Dorsolateral prefrontal cortex (tissue), 120 donors: ENCODE measurements at regions of chr16 and their contacts with region 1.

Region 1: GRCh38 chr16:1069154-1069553 is 3.4 kb upstream of the SSTR5 start:
- DNase-seq: no peak
- H3K4me3 ChIP-seq: no peak overlapping the region
- H3K27ac ChIP-seq: no peak overlapping the region
- H3K27me3 ChIP-seq: peaks cover 0 to 98% (median 77%) of the 10 kb centered on the region in 45 donors
- CTCF ChIP-seq: no peak

Region 2: DNA sequence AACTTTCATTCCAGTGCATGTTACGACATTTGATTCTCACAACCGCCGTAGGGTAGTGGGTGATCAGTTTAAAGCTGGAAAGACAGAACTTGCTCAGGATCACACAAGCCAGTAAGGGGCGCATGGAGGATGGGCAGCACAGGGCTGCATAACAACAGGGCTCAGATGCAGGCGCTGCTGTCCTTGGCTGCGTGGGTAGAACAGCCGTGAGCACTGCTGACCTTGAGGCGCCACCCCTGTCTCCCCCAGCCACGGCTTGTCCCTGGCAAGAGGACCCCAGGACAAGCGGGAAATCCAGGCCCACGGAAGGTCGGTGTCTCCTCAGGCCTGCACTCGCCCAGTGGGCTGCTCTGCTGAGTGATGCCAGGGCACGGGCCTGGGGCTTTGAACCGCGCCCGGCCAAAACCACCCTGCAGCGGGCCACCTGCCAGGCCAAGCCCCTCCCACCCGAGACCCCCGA is 183.0 kb before region 1 on chr16:
- intact Hi-C with region 1: loop called in 1 of 2 experiments (anchors 10 kb)
- DNase-seq: peak in 7 of 10 donors; percentile 50 to 78 (median 62)
- H3K4me3 ChIP-seq: peak overlapping the region in 1 of 59 donors; percentile 16
- H3K27ac ChIP-seq: peak overlapping the region in 54 of 59 donors; percentile 4 to 93 (median 78)
- H3K27me3 ChIP-seq: no peaks in the 10 kb centered on the region
- CTCF ChIP-seq: peak in 24 of 56 donors; percentile 18 to 50 (median 30)